ENCODE measurements at regions of chr20 and their contacts with region 1.

Region 1: GRCh38 chr20:13533946-13534345 is 104.8 kb downstream of the TASP1 start:
- DNase-seq: no peak
- H3K4me3 ChIP-seq: no peak overlapping the region
- H3K27ac ChIP-seq: no peak overlapping the region
- H3K4me1 ChIP-seq: no peaks in the 10 kb centered on the region
- H3K27me3 ChIP-seq: no peaks in the 10 kb centered on the region
- CTCF ChIP-seq: no peak
- POLR2A ChIP-seq: no peak

Region 2: DNA sequence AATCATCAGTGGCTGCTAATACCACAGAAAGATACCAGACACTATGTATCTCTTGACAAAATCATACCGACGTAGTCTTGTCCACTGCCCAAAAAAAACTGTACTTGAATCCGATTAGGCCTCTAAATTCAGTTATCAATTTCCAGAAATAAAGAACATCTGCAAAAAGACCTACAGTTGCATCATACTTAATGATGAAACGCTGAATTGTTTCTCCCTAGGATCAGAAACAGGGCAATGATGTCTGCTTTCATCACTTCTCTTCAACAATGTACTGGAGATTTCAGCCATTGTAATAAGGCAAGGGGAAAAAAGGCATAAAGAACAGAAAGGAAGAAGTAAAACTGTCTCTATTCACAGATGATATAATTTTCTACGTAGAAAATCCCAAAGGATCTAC is 47.3 kb before region 1 on chr20:
- CTCF ChIA-PET with region 1: no interaction called
- POLR2A ChIA-PET with region 1: interaction called, 11 read pairs
- dilution Hi-C with region 1: no loop called
- intact Hi-C with region 1: no loop called
- DNase-seq: no peak
- H3K4me3 ChIP-seq: no peak overlapping the region
- H3K27ac ChIP-seq: no peak overlapping the region
- H3K4me1 ChIP-seq: no peaks in the 10 kb centered on the region
- H3K27me3 ChIP-seq: no peaks in the 10 kb centered on the region
- CTCF ChIP-seq: no peak
- POLR2A ChIP-seq: no peak

Region 3: GRCh38 chr20:13515796-13516558 is 18.0 kb before region 1 on chr20:
- CTCF ChIA-PET with region 1: no interaction called
- POLR2A ChIA-PET with region 1: no interaction called
- dilution Hi-C with region 1: no loop called
- intact Hi-C with region 1: no loop called
- DNase-seq: no peak
- H3K4me3 ChIP-seq: no peak overlapping the region
- H3K27ac ChIP-seq: no peak overlapping the region
- H3K4me1 ChIP-seq: no peaks in the 10 kb centered on the region
- H3K27me3 ChIP-seq: no peaks in the 10 kb centered on the region
- CTCF ChIP-seq: no peak
- POLR2A ChIP-seq: no peak

Region 4: GRCh38 chr20:13659288-13659687 is 125.3 kb after region 1 on chr20:
- CTCF ChIA-PET with region 1: no interaction called
- POLR2A ChIA-PET with region 1: no interaction called
- dilution Hi-C with region 1: no loop called
- intact Hi-C with region 1: no loop called
- DNase-seq: no peak
- H3K4me3 ChIP-seq: no peak overlapping the region
- H3K27ac ChIP-seq: no peak overlapping the region
- H3K4me1 ChIP-seq: no peaks in the 10 kb centered on the region
- H3K27me3 ChIP-seq: no peaks in the 10 kb centered on the region
- CTCF ChIP-seq: no peak
- POLR2A ChIP-seq: no peak

Measured in endothelial cell of umbilical vein (primary cell).